ENCODE measurements at regions of chr12 and their contacts with region 1.

Region 1: GRCh38 chr12:55940065-55940732 is 9.2 kb downstream of the DGKA start:
- DNase-seq: peak; percentile 90
- ATAC-seq: peak; percentile 86
- H3K4me3 Mint-ChIP-seq: peak overlapping the region; percentile 22
- H3K27ac Mint-ChIP-seq: peak overlapping the region; percentile 99
- H3K4me1 Mint-ChIP-seq: peaks cover 80% of the 10 kb centered on the region
- H3K27me3 Mint-ChIP-seq: no peaks in the 10 kb centered on the region
- CTCF ChIP-seq: peak; percentile 84

Region 2: DNA sequence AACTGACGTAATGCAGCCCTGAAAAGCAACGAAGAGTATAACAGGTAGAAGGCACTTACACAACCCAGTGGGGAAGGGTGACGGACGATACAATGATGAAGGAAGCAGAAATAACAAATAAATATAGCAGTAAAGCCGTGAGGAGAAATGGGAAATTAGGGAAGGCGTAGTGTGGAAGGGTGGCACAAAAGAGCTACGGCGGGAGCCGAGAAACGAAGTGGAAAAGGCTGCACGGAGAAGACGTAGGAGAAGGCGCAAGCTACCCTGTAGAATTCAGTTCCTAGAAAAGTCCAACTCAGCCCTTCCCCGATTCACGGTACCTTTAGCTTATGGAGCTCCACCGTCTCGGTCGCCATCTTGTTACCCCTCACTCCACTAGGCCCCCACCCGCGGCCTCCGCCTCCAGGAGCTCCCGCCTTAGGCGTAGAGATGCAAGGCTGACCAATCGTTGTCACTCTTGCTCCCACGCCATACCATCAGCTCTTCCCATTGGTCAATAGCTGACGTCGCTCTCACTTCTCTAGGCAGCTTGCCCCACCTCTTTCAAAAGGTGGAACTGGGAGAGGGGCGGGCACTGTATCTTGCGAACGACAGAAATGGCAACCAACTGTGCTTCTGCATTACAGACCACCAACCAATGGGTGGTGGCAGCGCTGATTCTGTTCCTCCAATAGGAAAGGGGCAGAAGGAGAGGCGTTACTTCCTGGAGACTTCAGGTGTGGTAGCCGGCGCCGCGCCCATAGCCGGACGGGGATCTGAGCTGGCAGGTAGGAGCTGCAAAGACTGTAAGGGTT is 122.7 kb before region 1 on chr12 and contains the starts of genes ORMDL2 and SARNP:
- CTCF ChIA-PET with region 1: interaction called, 16 read pairs
- POLR2A ChIA-PET with region 1: interaction called, 17 read pairs
- intact Hi-C with region 1: no loop called
- DNase-seq: peak; percentile 99
- ATAC-seq: peak; percentile 97
- H3K4me3 Mint-ChIP-seq: no peak within 1 kb of the TSS
- H3K27ac Mint-ChIP-seq: no peak within 1 kb of the TSS
- H3K4me1 Mint-ChIP-seq: peaks cover 40% of the 10 kb centered on the region
- H3K27me3 Mint-ChIP-seq: no peaks in the 10 kb centered on the region
- CTCF ChIP-seq: no peak
- total RNA-seq, gene ORMDL2: 24.2 to 27.0 TPM
- total RNA-seq, gene SARNP: 93.9 to 94.0 TPM

Region 3: DNA sequence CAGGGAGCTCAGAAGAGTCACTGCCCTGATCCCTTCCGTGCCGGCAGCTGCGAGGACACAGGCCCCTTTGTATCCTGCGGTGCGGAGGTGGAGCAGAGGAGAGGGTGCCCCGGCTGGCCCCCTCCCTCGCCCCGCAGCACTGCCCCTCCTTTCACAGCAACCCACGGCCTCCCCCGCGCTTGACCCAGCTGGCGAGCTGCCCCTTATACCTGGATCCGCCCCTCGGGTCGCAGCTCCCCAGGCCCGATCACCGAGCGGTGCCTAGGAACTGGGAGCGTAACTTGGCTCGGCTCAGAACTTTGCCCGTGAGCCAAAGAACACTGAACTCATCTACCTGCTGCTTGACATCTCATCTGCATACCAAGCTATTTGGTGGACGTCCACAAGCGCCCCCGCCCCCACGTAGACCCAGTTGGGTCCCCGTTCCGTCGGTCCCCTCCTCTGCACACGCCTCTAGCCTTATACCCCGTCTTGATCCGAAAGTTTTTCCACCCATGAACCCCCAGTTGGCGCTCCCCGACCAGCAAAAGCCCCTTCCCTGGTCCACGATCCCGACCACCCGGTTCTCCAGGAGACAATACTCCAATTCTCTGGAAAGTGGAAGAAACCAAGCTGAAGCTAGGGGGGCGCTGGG is 110.1 kb before region 1 on chr12:
- CTCF ChIA-PET with region 1: interaction called, 19 read pairs
- POLR2A ChIA-PET with region 1: interaction called, 6 read pairs
- intact Hi-C with region 1: no loop called
- DNase-seq: peak; percentile 61
- ATAC-seq: peak; percentile 26
- H3K4me3 Mint-ChIP-seq: peak overlapping the region; percentile 97
- H3K27ac Mint-ChIP-seq: peak overlapping the region; percentile 93
- H3K4me1 Mint-ChIP-seq: peaks cover 44% of the 10 kb centered on the region
- H3K27me3 Mint-ChIP-seq: no peaks in the 10 kb centered on the region
- CTCF ChIP-seq: no peak

Region 4: GRCh38 chr12:55955800-55956508 is 15.8 kb after region 1 on chr12:
- CTCF ChIA-PET with region 1: interaction called, 10 read pairs
- POLR2A ChIA-PET with region 1: interaction called, 36 read pairs
- intact Hi-C with region 1: no loop called
- DNase-seq: peak; percentile 75
- ATAC-seq: peak; percentile 74
- H3K4me3 Mint-ChIP-seq: no peak overlapping the region
- H3K27ac Mint-ChIP-seq: peak overlapping the region; percentile 60
- H3K4me1 Mint-ChIP-seq: peaks cover 15% of the 10 kb centered on the region
- H3K27me3 Mint-ChIP-seq: no peaks in the 10 kb centered on the region
- CTCF ChIP-seq: peak; percentile 41

Region 5: DNA sequence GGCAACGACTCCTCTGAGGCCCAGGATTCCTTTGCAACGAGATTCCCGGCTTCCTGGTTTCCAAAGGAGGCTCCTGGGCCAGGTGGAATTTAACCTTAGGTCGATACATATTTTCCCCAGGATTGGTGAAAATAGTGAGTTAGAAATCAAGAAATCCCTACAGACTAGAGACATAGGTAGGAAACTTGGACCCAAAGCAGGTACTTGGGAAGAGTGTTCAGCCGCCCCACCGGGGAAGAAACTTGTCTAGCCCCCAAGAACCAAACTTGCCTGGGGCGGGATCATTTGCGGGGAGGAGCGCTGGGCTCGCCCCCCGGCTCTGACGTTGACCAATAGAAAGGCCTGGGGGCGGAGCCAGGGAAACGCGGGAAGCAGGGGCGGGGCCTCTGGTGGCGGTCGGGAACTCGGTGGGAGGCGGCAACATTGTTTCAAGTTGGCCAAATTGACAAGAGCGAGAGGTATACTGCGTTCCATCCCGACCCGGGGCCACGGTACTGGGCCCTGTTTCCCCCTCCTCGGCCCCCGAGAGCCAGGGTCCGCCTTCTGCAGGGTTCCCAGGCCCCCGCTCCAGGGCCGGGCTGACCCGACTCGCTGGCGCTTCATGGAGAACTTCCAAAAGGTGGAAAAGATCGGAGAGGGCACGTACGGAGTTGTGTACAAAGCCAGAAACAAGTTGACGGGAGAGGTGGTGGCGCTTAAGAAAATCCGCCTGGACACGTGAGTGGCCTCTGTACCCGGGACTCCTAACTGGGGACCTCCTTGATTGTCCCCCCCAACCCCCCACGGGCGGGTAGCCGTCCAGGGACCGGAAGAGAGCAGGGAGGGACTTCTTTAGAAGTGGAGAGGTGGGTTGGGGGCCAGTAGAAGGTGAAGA is 26.4 kb after region 1 on chr12 and contains the start of gene CDK2:
- CTCF ChIA-PET with region 1: interaction called, 10 read pairs
- POLR2A ChIA-PET with region 1: interaction called, 5 read pairs
- intact Hi-C with region 1: no loop called
- DNase-seq: peak; percentile 96
- ATAC-seq: peak; percentile 98
- H3K4me3 Mint-ChIP-seq: peak within 1 kb of the TSS; percentile 98
- H3K27ac Mint-ChIP-seq: peak within 1 kb of the TSS; percentile 89
- H3K4me1 Mint-ChIP-seq: peaks cover 22% of the 10 kb centered on the region
- H3K27me3 Mint-ChIP-seq: no peaks in the 10 kb centered on the region
- CTCF ChIP-seq: no peak
- total RNA-seq, gene CDK2: 86.7 to 90.1 TPM

Region 6: DNA sequence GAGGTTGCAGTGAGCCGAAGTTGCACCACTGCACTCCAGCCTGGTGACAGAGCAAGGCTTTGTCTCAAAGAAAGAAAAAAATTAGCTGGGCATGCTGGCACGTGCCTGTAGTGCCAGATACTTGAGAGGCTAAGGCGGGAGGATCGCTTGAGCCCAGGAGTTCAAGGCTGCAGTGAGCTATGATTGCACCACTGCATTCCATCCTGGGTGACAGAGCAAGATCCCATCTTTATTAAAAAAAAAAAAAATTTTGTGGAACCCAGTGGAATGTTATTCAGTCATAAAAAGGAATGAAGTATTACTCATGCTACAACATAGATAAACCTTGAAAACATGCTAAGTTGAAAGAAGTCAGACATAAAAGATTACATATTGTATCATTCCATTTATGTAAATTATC is 131.4 kb after region 1 on chr12:
- CTCF ChIA-PET with region 1: no interaction called
- POLR2A ChIA-PET with region 1: no interaction called
- intact Hi-C with region 1: no loop called
- DNase-seq: no peak
- ATAC-seq: no peak
- H3K4me3 Mint-ChIP-seq: no peak overlapping the region
- H3K27ac Mint-ChIP-seq: no peak overlapping the region
- H3K4me1 Mint-ChIP-seq: peaks cover 4% of the 10 kb centered on the region
- H3K27me3 Mint-ChIP-seq: no peaks in the 10 kb centered on the region
- CTCF ChIP-seq: no peak

Measured in activated CD8-positive, alpha-beta T cell treated with anti-CD3 and anti-CD28 coated beads for 36 hours (primary cell).